Mammary epithelial cell (primary cell): ENCODE measurements at regions of chr16 and their contacts with region 1.

Region 1: DNA sequence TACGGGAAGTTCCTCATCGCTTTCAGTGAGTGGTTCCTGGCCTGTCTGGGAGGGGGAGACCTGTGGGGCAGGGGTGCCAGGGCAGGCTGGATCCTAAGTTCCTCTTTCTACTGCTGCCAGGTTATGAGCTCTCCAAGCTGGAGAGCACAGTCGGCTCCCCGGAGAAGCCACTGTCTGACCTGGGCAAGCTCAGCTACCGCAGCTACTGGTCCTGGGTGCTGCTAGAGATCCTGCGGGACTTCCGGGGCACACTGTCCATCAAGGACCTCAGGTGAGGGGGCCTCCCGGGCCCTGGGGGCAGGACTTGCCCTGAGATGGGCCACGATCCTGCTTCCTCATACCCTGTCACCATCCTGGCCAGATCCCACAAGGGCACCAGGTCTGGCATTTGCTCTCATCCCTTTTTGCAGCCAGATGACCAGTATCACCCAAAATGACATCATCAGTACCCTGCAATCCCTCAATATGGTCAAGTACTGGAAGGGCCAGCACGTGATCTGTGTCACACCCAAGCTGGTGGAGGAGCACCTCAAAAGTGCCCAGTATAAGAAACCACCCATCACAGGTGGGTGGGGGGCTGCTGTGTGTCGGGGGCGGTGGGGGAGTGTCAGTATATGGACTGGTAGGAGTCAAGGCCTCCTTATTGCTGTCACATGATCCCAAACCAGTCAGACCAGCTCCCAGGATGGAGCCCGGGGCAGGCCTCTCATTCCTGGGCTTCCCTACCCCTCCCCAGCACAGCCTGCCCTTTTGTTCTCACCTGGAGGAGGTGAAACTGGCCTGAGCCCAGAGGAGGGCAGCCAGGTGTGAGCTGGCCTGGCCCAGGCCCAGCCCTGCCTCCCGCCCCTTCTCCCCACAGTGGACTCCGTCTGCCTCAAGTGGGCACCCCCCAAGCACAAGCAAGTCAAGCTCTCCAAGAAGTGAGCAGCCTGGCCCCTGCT is 4.9 kb downstream of the PRSS8 start:
- DNase-seq: peak; percentile 93
- H3K4me3 ChIP-seq: no peak overlapping the region
- H3K27ac ChIP-seq: peak overlapping the region; percentile 46
- H3K4me1 ChIP-seq: peaks cover 57% of the 10 kb centered on the region
- H3K27me3 ChIP-seq: no peaks in the 10 kb centered on the region
- CTCF ChIP-seq: peak in 1 of 2 donors; percentile 11

Region 2: DNA sequence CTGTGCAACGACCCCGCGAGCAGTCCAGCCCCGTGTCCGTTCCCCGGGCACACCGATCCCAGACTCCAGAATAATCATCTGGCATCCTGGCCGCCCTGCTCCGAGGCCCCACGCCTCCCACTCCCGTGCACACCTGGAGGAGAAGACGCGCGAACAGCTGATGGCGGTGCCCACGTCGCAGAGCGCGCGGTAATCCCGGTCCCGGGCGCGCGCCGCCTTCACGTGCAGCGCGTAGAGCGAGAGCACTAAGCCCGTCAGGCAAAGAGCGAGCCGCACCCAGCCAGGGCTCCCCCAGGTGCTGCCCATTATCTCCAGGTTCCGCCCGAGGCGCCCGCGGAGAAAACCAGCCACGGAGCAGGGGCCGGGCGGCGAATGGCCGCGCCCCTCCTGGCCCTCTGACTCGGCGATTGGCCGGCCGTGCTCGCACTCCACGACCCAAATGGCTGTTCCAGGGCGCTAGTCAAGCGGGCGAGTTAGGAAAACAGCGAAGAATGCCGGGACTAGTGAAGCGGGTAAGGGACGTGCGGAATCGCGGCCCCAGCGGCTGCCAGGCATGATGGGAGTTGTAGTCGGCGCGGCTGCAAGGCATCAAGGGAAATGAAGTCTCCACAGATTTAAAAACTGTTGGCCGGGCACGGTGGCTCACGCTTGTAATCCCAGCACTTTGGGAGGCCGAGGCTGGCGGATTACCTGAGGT is 36.0 kb before region 1 on chr16 and contains the start of gene VKORC1:
- CTCF ChIA-PET with region 1: no interaction called
- dilution Hi-C with region 1: no loop called
- in situ Hi-C with region 1: no loop called
- intact Hi-C with region 1: loop called (anchors 1 kb)
- DNase-seq: peak; percentile 99
- H3K4me3 ChIP-seq: peak within 1 kb of the TSS; percentile 57 to 98 (median 71)
- H3K27ac ChIP-seq: peak within 1 kb of the TSS; percentile 81
- H3K4me1 ChIP-seq: peaks cover 4% of the 10 kb centered on the region
- H3K27me3 ChIP-seq: no peaks in the 10 kb centered on the region
- CTCF ChIP-seq: no peak
- total RNA-seq, gene VKORC1: 45.7 to 65.0 TPM

Region 3: DNA sequence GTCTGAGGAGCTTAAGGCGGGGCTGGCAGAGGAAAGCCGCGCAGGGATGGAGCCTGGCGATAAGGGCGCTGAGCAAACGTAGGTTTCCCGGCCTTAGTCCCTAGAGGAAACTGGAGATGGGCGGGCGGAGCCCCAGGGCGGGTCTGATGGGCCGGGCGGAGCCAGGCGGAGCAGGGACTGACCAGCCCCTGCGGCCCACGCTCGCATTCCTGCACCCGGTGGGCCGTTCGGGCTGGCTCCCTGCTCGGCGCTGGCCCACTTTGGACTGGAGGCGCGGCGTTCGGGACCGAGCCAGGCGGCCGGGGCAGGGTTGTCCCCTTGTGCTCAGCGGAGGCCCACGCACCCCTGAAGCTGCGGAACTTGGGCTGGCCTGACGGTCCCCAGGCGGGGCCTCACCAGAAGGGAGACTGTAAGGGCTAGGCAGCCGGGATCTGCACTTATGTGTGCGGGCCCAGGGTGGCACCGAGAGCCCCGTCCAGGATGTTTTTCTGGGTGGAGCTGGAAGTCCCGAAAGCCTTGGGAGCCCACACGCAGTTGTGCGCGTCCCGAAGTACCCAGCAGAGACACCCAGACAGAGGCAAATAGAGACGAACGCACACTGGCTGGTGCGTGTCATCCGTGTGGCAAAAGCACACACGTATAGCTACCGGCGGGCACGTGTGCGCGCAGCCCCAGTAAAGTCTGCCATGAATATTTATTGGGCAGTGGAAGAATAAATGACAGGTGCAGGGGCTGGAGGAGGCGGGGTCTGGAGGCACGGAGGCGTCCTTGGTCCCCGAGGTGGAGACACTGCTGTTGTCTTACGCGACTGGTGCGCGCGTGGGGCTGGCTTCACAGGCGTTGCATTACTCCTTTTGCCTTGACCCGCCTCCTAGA is 84.9 kb after region 1 on chr16:
- CTCF ChIA-PET with region 1: no interaction called
- dilution Hi-C with region 1: no loop called
- in situ Hi-C with region 1: no loop called
- intact Hi-C with region 1: no loop called
- DNase-seq: peak; percentile 53
- H3K4me3 ChIP-seq: peak overlapping the region in 2 of 3 experiments; percentile 32 to 49
- H3K27ac ChIP-seq: no peak overlapping the region
- H3K4me1 ChIP-seq: peaks cover 24% of the 10 kb centered on the region
- H3K27me3 ChIP-seq: peaks cover 15% of the 10 kb centered on the region
- CTCF ChIP-seq: no peak